ENCODE measurements at regions of chr2 and their contacts with region 1.

Region 1: DNA sequence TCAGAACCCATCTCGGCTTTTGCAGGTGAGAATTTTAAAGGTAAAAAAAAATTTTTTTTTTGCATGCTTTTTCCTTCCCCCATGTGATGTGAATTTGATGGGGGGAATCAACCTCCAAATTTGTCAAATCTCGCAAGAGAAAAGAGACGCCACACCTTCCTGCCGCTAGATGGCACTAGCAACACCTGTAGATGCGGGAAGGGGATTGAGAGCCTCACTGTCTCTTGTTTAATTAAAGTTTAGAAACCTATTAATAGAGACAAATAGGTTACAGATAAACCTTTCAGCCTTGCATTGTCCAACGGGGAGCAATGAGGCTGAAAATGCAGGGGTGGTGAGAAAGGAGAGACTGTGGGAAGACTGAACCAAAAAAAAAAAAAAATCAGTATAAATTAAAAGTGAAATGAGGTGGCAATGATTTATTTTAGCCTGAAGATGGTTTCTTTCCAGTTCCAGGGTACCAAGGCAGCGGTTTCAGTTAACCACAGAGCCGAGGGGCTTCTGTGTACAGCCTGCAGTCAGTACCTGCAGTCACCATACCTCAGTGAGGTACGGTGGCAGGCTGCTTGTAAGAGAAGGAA is 84.6 kb downstream of the NRP2 start:
- DNase-seq: peak in 1 of 2 donors; percentile 65
- ATAC-seq: peak; percentile 63
- H3K4me3 ChIP-seq: no peak overlapping the region
- H3K27ac ChIP-seq: no peak overlapping the region
- H3K4me1 ChIP-seq: peaks cover 0 to 2% of the 10 kb centered on the region in 2 donors
- H3K27me3 ChIP-seq: no peaks in the 10 kb centered on the region

Region 2: GRCh38 chr2:205754924-205755321 is 11.9 kb before region 1 on chr2:
- intact Hi-C with region 1: no loop called
- DNase-seq: no peak
- ATAC-seq: no peak
- H3K4me3 ChIP-seq: no peak overlapping the region
- H3K27ac ChIP-seq: peak overlapping the region; percentile 73 to 86
- H3K4me1 ChIP-seq: peaks cover 18 to 20% of the 10 kb centered on the region in 2 donors
- H3K27me3 ChIP-seq: no peaks in the 10 kb centered on the region

Region 3: DNA sequence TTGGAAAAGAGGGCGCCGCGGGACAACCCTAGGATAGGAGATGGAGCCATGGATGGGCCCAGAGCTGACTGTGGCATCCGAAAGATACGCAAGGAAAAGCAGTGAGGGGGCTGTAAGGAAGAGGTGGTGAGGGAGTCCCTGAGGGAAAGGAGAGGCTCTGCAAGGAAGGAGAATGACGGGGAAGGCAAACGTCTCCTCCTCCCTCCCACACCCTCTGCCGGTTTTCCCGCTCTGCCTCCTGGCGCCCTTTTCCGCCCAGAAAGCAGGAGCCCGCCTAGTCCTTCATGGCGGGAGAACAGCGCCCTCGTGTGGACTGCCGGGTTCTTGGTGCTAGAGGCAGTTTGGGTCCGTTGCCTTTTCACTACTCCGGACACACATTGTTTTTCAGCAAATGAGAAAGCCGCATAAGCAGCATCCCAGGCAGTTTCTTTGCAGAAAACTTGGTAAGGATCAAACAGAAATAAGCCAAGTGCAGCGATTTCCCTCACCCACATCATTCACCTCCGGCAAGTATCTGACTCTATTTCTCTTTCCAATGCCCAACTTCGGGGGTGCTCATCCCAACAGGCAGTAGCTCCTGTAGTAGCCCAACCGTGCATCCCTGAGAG is 118.7 kb after region 1 on chr2:
- intact Hi-C with region 1: loop called (anchors 5 kb)
- DNase-seq: peak; percentile 88 to 95
- ATAC-seq: peak; percentile 90
- H3K4me3 ChIP-seq: no peak overlapping the region
- H3K27ac ChIP-seq: no peak overlapping the region
- H3K4me1 ChIP-seq: no peaks in the 10 kb centered on the region
- H3K27me3 ChIP-seq: no peaks in the 10 kb centered on the region